Activated CD4-positive, alpha-beta T cell treated with anti-CD3 and anti-CD28 coated beads, Interleukin-2, amount 10 ng/mL, durations not matched to agents 24 days and 14 days (primary cell): ENCODE measurements at regions of chr7 and their contacts with region 1.

Region 1: GRCh38 chr7:92904292-92905131 is 68.1 kb upstream of the CDK6 start:
- DNase-seq: peak; percentile 93
- H3K4me3 Mint-ChIP-seq: peak overlapping the region; percentile 53
- H3K27ac Mint-ChIP-seq: peak overlapping the region; percentile 94
- H3K4me1 Mint-ChIP-seq: peaks cover 21% of the 10 kb centered on the region
- H3K27me3 Mint-ChIP-seq: no peaks in the 10 kb centered on the region

Region 2: DNA sequence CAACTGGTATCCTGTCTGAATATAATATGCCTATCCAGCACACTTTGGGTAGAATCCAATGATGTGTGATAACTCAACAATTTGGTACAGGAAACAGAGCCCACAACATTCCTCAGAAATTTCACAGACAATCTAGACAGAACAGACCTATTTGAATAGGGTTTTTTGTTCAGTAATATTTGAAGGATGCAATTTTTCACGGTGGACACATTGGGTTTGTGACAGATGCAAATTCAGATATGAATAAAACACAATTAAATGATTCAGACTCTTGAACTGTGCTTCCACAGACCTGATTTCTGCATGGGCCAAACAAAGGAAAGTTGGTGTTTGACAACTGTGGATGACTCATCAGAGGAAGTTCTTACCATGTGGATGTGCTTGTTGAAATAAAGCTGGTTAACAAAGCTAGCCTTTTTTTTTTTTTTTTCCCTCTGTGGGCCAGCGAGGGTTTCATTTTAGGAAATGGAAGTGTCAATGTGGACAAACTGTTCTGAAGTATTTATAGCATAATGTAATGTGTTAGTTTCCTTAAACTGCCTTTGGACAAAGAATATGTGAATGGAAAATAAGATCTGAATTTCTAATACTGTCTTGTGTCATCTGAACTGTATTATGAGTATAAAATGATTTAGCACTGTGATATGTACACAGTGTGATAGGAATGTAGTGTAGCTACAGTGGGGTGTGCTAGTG is 271.2 kb before region 1 on chr7:
- intact Hi-C with region 1: loop called (anchors 1 kb)
- DNase-seq: peak; percentile 84
- H3K4me3 Mint-ChIP-seq: peak overlapping the region; percentile 65
- H3K27ac Mint-ChIP-seq: peak overlapping the region; percentile 97
- H3K4me1 Mint-ChIP-seq: peaks cover 64% of the 10 kb centered on the region
- H3K27me3 Mint-ChIP-seq: no peaks in the 10 kb centered on the region

Region 3: DNA sequence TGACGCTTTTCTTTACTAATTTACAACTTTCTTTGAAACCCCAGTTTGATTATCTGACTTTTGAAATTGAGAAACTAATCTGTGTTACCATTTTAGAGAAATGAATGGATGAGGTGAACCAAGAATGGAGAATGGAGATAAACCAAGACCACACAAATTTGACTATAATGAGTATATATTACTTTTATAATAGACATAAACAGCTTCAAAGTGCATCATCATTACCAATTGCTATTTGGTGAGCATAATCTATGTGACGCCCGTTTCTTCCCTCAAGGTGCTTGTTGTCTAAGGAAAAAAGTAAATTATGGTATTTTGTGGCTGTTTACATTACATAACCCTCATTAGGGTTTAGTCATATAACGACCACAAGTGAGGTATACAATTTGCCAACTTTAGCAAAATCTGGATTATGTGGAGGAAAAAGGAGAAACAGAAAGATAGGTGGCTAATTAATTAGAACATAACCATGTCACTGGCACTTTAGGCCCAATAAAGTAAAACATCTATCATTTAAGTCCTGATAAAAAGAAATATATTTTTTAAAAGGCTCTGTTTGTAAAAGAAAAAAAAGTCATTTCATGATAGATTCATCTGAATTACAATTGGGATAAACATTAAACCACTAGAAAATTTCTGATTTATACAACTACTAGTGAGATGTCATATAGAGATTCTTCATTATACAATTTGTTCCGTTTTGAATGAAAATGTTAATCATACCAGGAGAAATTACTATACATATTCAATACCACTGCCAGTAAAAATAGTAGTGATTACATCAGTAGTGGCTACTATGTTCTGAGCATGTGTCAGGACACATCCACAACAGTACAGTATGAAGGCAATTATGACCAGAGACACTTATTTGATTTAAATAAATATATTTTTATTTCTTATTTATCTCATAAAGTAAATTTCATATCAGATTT is 196.1 kb before region 1 on chr7:
- intact Hi-C with region 1: loop called (anchors 1 kb)
- DNase-seq: no peak
- H3K4me3 Mint-ChIP-seq: no peak overlapping the region
- H3K27ac Mint-ChIP-seq: peak overlapping the region; percentile 79
- H3K4me1 Mint-ChIP-seq: peaks cover 34% of the 10 kb centered on the region
- H3K27me3 Mint-ChIP-seq: no peaks in the 10 kb centered on the region

Region 4: GRCh38 chr7:92854501-92855238 is 49.8 kb before region 1 on chr7:
- intact Hi-C with region 1: loop called (anchors 1 kb)
- DNase-seq: peak; percentile 68
- H3K4me3 Mint-ChIP-seq: peak overlapping the region; percentile 51
- H3K27ac Mint-ChIP-seq: peak overlapping the region; percentile 85
- H3K4me1 Mint-ChIP-seq: peaks cover 16% of the 10 kb centered on the region
- H3K27me3 Mint-ChIP-seq: no peaks in the 10 kb centered on the region

Region 5: DNA sequence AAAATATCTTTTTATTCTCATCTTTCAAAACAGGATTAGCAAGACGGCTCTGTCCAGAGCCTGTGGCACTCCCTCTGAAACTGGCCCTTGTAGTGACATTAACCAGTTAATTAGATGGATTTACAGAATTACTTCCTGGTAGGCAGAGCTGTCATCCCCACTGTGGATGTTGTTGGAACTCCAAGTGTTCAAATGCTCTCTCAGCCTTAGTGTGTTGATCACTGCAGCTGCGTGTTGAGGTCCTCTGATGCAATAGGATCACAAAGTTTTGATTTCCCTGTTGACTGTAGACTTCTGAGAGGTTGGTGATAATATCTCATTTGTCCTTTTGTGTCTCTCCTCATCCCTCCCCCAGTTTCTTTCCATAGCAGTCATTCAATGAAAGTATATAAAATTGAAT is 49.1 kb after region 1 on chr7:
- intact Hi-C with region 1: loop called (anchors 1 kb)
- DNase-seq: no peak
- H3K4me3 Mint-ChIP-seq: no peak overlapping the region
- H3K27ac Mint-ChIP-seq: peak overlapping the region; percentile 78
- H3K4me1 Mint-ChIP-seq: peaks cover 14% of the 10 kb centered on the region
- H3K27me3 Mint-ChIP-seq: no peaks in the 10 kb centered on the region

Region 6: GRCh38 chr7:93117852-93118530 is 213.5 kb after region 1 on chr7 and contains the start of gene SAMD9:
- intact Hi-C with region 1: loop called (anchors 5 kb)
- DNase-seq: peak; percentile 90
- H3K4me3 Mint-ChIP-seq: peak within 1 kb of the TSS; percentile 90
- H3K27ac Mint-ChIP-seq: peak within 1 kb of the TSS; percentile 90
- H3K4me1 Mint-ChIP-seq: peaks cover 54% of the 10 kb centered on the region
- H3K27me3 Mint-ChIP-seq: no peaks in the 10 kb centered on the region
- total RNA-seq, gene SAMD9: 8.6 and 9.4 TPM in 2 replicates

Region 7: DNA sequence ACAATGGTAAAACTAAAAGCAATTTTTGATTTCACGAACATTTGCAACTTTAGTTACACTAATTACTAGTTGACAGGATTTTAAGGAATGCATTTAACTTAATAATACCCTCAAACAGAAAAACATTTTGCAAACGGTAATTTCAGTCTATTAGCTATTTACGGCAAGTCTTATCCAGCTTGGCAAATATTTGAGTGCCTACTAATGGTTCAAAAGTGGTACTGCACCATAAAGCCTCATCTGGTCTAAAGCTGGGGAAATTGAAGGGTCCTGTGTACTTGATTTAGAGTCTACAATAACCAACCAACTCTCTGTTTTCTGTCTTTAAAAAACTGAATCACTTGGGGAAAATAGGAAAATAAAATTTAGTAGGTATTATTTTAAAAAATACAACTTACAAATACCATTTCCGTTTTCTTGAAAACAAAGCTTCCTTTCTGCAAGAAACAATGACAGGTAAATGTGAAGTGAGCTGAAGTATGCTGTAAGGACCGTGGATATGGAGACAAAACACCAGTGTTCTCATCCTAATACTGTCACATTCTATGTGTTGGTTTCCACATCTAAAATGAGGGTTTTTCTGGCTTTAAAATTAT is 469.9 kb after region 1 on chr7:
- intact Hi-C with region 1: no loop called
- DNase-seq: no peak
- H3K4me3 Mint-ChIP-seq: no peak overlapping the region
- H3K27ac Mint-ChIP-seq: no peak overlapping the region
- H3K4me1 Mint-ChIP-seq: no peaks in the 10 kb centered on the region
- H3K27me3 Mint-ChIP-seq: peaks cover 19% of the 10 kb centered on the region